ENCODE measurements at regions of chr5 and their contacts with region 1.

Region 1: GRCh38 chr5:83401122-83401731 is 70.3 kb upstream of the VCAN start:
- DNase-seq: no peak
- ATAC-seq: no peak
- H3K4me3 ChIP-seq: no peak overlapping the region
- H3K27ac ChIP-seq: peak overlapping the region in 3 of 10 donors; percentile 1 to 23 (median 21)
- H3K4me1 ChIP-seq: peaks cover 0 to 14% (median 7%) of the 10 kb centered on the region in 9 donors
- H3K27me3 ChIP-seq: no peaks in the 10 kb centered on the region
- CTCF ChIP-seq: no peak

Region 2: DNA sequence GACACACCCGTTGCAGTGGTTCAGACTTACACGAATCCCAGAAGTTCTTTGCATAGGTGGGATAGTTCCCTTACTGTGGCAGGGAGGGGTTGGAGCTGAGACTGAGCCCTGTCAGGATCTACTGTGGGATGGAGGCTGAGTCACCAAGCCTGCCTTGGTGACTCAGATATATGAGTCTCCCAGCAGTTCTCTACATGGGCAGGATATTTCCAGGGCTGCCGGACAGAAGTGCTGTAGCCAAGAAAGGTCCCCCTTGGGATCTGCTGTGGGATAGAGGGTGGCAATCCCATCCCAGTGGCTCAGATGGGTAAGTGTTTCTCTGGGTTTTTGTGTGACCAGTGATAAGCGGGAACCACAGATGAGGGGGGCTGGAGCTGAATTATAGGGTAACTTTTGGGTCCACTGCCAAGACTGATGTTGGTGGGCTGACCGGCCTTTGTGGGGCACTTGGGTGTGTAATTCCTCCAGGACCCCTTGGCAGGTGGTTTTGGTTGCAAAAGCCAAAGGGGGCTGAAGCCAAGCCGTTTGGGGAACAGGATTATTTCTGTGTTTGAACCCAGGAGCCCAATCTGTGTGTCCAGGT is 305.2 kb before region 1 on chr5:
- intact Hi-C with region 1: loop called in 1 of 10 experiments (anchors 10 kb)
- DNase-seq: no peak
- ATAC-seq: peak in 7 of 8 donors; percentile 14 to 90 (median 63)
- H3K4me3 ChIP-seq: no peak overlapping the region
- H3K27ac ChIP-seq: peak overlapping the region in 1 of 10 donors; percentile 11
- H3K4me1 ChIP-seq: peaks cover 0 to 26% (median 13%) of the 10 kb centered on the region in 9 donors
- H3K27me3 ChIP-seq: no peaks in the 10 kb centered on the region
- CTCF ChIP-seq: no peak

Region 3: GRCh38 chr5:83277953-83278352 is 123.3 kb before region 1 on chr5:
- intact Hi-C with region 1: loop called in 1 of 10 experiments (anchors 5 kb)
- DNase-seq: no peak
- ATAC-seq: no peak
- H3K4me3 ChIP-seq: no peak overlapping the region
- H3K27ac ChIP-seq: no peak overlapping the region
- H3K4me1 ChIP-seq: peaks cover 0 to 5% (median 0%) of the 10 kb centered on the region in 9 donors
- H3K27me3 ChIP-seq: no peaks in the 10 kb centered on the region
- CTCF ChIP-seq: no peak

Region 4: GRCh38 chr5:83450183-83450966 is 49.1 kb after region 1 on chr5:
- intact Hi-C with region 1: no loop called
- DNase-seq: peak in 1 of 2 donors; percentile 14
- ATAC-seq: peak; percentile 67 to 85 (median 80)
- H3K4me3 ChIP-seq: no peak overlapping the region
- H3K27ac ChIP-seq: no peak overlapping the region
- H3K4me1 ChIP-seq: peaks cover 0 to 15% (median 0%) of the 10 kb centered on the region in 9 donors
- H3K27me3 ChIP-seq: no peaks in the 10 kb centered on the region
- CTCF ChIP-seq: no peak